ENCODE measurements at regions of chr16 and their contacts with region 1.

Region 1: DNA sequence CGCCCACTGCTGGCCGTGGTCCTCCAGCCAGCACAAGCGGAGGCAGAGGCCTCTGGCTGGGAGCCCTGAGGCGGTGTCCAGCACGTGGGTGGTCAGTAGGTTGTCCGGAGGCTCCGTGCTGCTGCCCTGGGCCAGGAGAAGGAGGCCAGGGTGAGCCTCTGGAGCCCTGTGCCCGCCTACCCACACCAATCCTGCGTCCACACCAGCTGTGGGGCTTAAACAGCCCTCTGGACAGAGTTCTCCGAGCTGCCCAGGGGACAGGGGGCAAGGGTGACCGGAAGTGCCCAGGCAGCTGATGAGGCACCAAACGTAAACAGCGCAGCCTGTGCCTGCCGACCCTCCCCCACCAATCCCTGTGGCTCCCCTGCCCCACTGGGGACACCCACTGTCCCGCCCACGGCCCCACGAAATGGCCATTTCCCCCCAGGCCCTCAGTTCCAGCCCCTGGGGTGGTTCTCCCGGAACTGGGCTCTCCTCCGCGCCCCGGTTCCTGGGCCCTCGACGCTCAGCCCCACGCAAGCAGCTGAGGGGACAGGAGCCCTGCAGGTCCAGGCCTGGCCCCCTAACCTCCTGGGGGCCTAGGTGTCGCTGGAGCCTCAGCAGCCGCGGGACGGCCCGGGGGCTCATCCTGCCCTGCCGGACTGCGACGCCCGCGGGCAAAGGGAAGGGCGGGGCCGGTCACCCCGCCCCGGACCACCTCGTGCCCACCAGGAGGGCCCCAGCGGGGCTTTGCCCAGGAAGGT is 27.9 kb upstream of the DBNDD1 start:
- DNase-seq: peak in 1 of 2 experiments; percentile 88
- H3K4me3 ChIP-seq: peak overlapping the region; percentile 34 to 70 (median 43)
- H3K27ac ChIP-seq: no peak overlapping the region
- H3K4me1 ChIP-seq: peaks cover 0 to 11% (median 8%) of the 10 kb centered on the region in 4 experiments; a peak in 6 of 7 replicates
- H3K27me3 ChIP-seq: no peaks in the 10 kb centered on the region
- CTCF ChIP-seq: no peak
- EP300 ChIP-seq: no peak
- POLR2A ChIP-seq: peak in 1 of 2 experiments; percentile 44; a peak in 1 of 3 replicates
- RAD21 ChIP-seq: no peak; a peak in 1 of 4 replicates

Region 2: GRCh38 chr16:89953671-89954419 is 93.3 kb before region 1 on chr16:
- CTCF ChIA-PET with region 1: no interaction called
- POLR2A ChIA-PET with region 1: no interaction called
- DNase-seq: no peak
- H3K4me3 ChIP-seq: no peak overlapping the region
- H3K27ac ChIP-seq: no peak overlapping the region
- H3K4me1 ChIP-seq: peaks cover 0 to 6% (median under 1%) of the 10 kb centered on the region in 4 experiments; a peak in 5 of 7 replicates
- H3K27me3 ChIP-seq: peaks cover 0 to 9% (median 4%) of the 10 kb centered on the region in 4 experiments; a peak in 4 of 7 replicates
- CTCF ChIP-seq: no peak
- EP300 ChIP-seq: no peak
- POLR2A ChIP-seq: no peak
- RAD21 ChIP-seq: no peak

Region 3: DNA sequence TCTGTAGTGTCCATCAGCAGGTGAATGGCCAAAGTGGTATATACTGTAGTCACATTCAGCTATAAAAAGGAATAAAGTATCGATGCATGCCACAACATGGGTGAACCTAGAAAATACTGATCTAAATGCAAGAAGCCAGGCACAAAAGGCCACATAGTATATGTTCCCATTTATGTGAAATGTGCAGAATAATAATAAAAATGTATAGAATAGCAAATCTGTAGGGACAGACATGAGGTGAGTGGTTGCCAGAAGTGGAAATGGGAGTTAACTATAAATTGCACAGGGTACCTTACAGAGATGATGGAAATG is 51.0 kb before region 1 on chr16:
- CTCF ChIA-PET with region 1: no interaction called
- POLR2A ChIA-PET with region 1: no interaction called
- DNase-seq: no peak
- H3K4me3 ChIP-seq: no peak overlapping the region
- H3K27ac ChIP-seq: peak overlapping the region; percentile 92
- H3K4me1 ChIP-seq: no peaks in the 10 kb centered on the region
- H3K27me3 ChIP-seq: no peaks in the 10 kb centered on the region
- CTCF ChIP-seq: no peak
- EP300 ChIP-seq: no peak
- POLR2A ChIP-seq: no peak
- RAD21 ChIP-seq: no peak

Region 4: DNA sequence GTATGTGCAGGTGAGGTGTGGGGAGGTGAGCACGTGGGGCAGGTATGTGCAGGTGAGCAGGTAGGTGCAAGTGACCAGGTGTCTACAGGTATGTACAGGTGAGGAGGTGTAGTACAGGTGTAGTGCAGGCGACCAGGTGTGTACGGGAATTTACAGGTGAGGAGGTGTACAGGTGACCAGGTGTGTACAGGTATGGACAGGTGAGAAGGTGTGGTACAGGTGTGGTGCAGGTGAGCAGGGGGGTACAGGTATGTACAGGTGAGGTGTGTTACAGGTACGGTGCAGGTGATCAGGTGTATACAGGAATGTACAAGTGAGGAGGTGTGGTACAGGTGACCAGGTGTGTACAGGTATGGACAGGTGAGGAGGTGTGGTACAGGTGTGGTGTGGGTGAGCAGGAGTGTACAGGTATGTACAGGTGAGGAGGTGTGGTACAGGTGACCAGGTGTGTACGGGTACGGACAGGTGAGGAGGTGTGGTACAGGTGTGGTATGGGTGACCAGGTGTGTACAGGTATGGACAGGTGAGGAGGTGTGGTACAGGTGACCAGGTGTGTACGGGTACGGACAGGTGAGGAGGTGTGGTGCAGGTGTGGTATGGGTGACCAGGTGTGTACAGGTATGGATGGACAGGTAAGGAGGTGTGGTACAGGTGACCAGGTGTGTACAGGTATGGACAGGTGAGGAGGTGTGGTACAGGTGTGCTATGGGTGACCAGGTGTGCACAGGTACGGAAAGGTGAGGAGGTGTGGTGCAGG is 15.0 kb before region 1 on chr16:
- CTCF ChIA-PET with region 1: interaction called, 5 read pairs
- POLR2A ChIA-PET with region 1: interaction called, 11 read pairs
- DNase-seq: no peak
- H3K4me3 ChIP-seq: no peak overlapping the region
- H3K27ac ChIP-seq: no peak overlapping the region
- H3K4me1 ChIP-seq: peaks cover 0 to 14% (median 7%) of the 10 kb centered on the region in 4 experiments; a peak in 5 of 7 replicates
- H3K27me3 ChIP-seq: no peaks in the 10 kb centered on the region
- CTCF ChIP-seq: no peak
- EP300 ChIP-seq: no peak
- POLR2A ChIP-seq: no peak
- RAD21 ChIP-seq: no peak

Region 5: GRCh38 chr16:90057738-90058173 is 10.6 kb after region 1 on chr16:
- CTCF ChIA-PET with region 1: no interaction called
- POLR2A ChIA-PET with region 1: no interaction called
- DNase-seq: no peak
- H3K4me3 ChIP-seq: no peak overlapping the region
- H3K27ac ChIP-seq: no peak overlapping the region
- H3K4me1 ChIP-seq: no peaks in the 10 kb centered on the region
- H3K27me3 ChIP-seq: no peaks in the 10 kb centered on the region
- CTCF ChIP-seq: no peak
- EP300 ChIP-seq: no peak
- POLR2A ChIP-seq: no peak
- RAD21 ChIP-seq: no peak

Measured in H1 (cell line).